ENCODE measurements at regions of chr10 and their contacts with region 1.

Region 1: GRCh38 chr10:63619426-63619825 is 98.2 kb downstream of the REEP3 start:
- DNase-seq: no peak
- H3K4me3 Mint-ChIP-seq: no peak overlapping the region
- H3K27ac Mint-ChIP-seq: no peak overlapping the region
- H3K4me1 Mint-ChIP-seq: no peaks in the 10 kb centered on the region
- H3K27me3 Mint-ChIP-seq: no peaks in the 10 kb centered on the region

Region 2: GRCh38 chr10:63603709-63604445 is 15.5 kb before region 1 on chr10:
- CTCF ChIA-PET with region 1: no interaction called
- POLR2A ChIA-PET with region 1: no interaction called
- DNase-seq: no peak
- H3K4me3 Mint-ChIP-seq: no peak overlapping the region
- H3K27ac Mint-ChIP-seq: no peak overlapping the region
- H3K4me1 Mint-ChIP-seq: peaks cover 6% of the 10 kb centered on the region
- H3K27me3 Mint-ChIP-seq: no peaks in the 10 kb centered on the region

Region 3: GRCh38 chr10:63629363-63630084 is 10.1 kb after region 1 on chr10:
- CTCF ChIA-PET with region 1: interaction called, 25 read pairs
- POLR2A ChIA-PET with region 1: no interaction called
- DNase-seq: peak; percentile 84
- H3K4me3 Mint-ChIP-seq: peak overlapping the region; percentile 81
- H3K27ac Mint-ChIP-seq: peak overlapping the region; percentile 90
- H3K4me1 Mint-ChIP-seq: peaks cover 49% of the 10 kb centered on the region
- H3K27me3 Mint-ChIP-seq: peaks cover 1% of the 10 kb centered on the region

Region 4: GRCh38 chr10:63641366-63641765 is 21.9 kb after region 1 on chr10:
- CTCF ChIA-PET with region 1: no interaction called
- POLR2A ChIA-PET with region 1: no interaction called
- DNase-seq: no peak
- H3K4me3 Mint-ChIP-seq: no peak overlapping the region
- H3K27ac Mint-ChIP-seq: no peak overlapping the region
- H3K4me1 Mint-ChIP-seq: peaks cover 5% of the 10 kb centered on the region
- H3K27me3 Mint-ChIP-seq: no peaks in the 10 kb centered on the region

Region 5: GRCh38 chr10:63651864-63652263 is 32.4 kb after region 1 on chr10:
- CTCF ChIA-PET with region 1: no interaction called
- POLR2A ChIA-PET with region 1: no interaction called
- DNase-seq: no peak
- H3K4me3 Mint-ChIP-seq: no peak overlapping the region
- H3K27ac Mint-ChIP-seq: no peak overlapping the region
- H3K4me1 Mint-ChIP-seq: no peaks in the 10 kb centered on the region
- H3K27me3 Mint-ChIP-seq: no peaks in the 10 kb centered on the region

Measured in activated CD4-positive, alpha-beta T cell treated with anti-CD3 and anti-CD28 coated beads, Interleukin-2, amount 10 ng/mL, durations not matched to agents 7 days and 5 days (primary cell).